ENCODE measurements at regions of chr12 and their contacts with region 1.

Region 1: DNA sequence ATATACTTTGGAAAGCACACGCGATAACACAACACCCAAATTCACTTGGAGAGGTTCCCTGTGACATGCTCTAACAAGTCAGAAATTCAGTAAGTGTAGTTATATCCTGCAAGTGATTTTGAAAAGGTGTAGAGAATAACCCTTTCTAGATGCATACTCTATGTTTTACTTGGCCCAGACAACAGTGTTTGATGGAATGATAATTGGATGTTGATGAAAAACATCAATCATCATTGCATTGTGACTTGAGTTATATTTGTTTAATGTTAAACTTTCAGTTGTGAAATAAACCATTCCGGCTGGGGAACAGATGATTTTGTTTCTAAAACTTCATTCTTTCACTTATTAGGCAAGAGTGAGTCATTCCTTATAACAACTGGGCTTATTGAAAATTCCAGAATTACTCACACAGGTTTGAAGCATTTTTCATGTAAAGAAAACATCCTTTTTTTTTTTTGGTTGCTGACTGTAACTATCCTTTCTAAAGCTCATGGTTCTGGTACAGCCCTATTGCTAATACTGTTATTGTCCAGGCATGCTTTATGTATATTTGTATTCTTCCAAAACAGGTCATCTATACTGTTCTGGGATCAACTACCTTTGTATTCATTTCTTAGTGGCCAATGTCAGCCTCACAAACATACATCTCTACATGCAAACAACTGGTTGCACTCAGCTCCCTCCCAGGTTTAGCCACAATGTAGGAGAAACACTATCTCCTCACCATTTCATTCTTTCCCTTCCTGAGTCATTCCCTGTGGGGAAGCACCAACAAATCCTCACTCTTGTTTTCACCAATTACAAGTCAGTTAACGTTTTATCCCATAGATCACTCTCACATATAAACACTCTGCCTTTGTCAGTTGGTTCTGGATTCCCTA is 121.2 kb upstream of the LRIG3 start:
- DNase-seq: peak; percentile 78
- H3K4me3 ChIP-seq: no peak overlapping the region; the same call in 1 of the 2 replicates
- H3K27ac ChIP-seq: peak overlapping the region; percentile 93
- H3K27me3 ChIP-seq: no peaks in the 10 kb centered on the region
- CTCF ChIP-seq: no peak

Region 2: DNA sequence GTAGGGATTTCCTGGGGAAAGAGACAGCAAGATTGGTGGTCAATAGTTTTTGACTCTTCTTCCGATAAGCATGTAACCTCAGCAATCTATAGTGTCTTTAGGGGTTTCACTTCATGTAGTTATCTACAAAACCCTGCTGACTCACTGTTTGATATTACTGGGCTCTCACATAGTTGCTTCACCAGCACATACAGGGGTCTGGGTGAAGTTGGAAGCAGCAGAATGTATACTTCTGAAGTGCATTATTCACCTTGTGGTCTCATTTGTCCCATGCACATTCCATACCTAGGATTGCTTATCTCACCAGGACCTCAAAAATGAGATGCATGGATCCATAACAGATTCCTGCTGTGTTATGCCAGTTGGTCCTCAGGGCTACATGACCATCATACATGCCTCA is 401.2 kb before region 1 on chr12:
- CTCF ChIA-PET with region 1: no interaction called
- POLR2A ChIA-PET with region 1: no interaction called
- DNase-seq: no peak
- H3K4me3 ChIP-seq: no peak overlapping the region
- H3K27ac ChIP-seq: no peak overlapping the region
- H3K27me3 ChIP-seq: no peaks in the 10 kb centered on the region
- CTCF ChIP-seq: no peak

Region 3: DNA sequence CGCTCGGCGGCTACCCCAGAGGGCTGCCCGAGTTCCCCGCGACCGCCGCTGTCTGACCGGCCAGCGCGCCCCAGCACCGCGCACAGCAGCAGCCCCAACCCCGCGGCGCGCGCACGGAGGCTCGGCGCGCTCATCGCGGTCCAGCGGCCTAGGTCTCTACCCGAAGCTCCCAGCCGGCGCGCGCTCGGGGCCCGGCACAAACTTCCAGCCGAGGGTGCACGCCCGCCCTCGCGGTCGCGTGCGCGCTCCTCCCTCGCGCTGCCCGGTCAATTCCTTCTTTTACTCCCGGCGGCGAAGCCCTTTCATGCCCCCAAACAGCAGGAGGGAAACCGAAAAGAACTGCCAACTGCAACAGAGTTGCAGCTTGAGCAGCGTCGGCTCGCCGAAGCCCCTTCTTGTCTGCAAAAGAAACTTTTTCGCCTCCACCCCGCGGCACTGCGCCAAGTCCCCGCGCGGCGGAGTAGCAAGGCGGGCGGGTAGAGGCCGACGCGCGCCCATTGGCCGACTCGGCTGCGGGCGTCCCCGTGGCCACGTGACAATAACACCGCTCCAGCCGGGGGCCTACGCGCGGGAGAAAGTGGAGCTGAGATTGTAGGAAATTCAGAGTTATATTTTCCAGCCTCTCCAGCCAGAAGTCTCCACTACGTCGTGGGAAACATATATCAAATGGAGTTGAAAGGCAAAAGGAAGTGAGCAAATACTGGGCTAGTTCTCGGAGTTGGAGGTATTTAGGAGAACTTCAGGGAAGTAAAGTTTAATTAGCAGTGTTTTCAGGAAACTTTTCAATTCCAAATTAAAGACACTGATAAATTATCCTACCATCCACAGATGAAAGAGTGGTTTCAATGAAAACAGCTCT is 121.2 kb before region 1 on chr12 and contains the start of gene LRIG3:
- CTCF ChIA-PET with region 1: no interaction called
- POLR2A ChIA-PET with region 1: interaction called, 29 read pairs
- DNase-seq: peak; percentile 76
- H3K4me3 ChIP-seq: peak within 1 kb of the TSS; percentile 75
- H3K27ac ChIP-seq: peak within 1 kb of the TSS; percentile 85
- H3K27me3 ChIP-seq: no peaks in the 10 kb centered on the region
- CTCF ChIP-seq: no peak
- polyA plus RNA-seq, gene LRIG3: 58.2 and 80.1 TPM in 2 replicates

Region 4: DNA sequence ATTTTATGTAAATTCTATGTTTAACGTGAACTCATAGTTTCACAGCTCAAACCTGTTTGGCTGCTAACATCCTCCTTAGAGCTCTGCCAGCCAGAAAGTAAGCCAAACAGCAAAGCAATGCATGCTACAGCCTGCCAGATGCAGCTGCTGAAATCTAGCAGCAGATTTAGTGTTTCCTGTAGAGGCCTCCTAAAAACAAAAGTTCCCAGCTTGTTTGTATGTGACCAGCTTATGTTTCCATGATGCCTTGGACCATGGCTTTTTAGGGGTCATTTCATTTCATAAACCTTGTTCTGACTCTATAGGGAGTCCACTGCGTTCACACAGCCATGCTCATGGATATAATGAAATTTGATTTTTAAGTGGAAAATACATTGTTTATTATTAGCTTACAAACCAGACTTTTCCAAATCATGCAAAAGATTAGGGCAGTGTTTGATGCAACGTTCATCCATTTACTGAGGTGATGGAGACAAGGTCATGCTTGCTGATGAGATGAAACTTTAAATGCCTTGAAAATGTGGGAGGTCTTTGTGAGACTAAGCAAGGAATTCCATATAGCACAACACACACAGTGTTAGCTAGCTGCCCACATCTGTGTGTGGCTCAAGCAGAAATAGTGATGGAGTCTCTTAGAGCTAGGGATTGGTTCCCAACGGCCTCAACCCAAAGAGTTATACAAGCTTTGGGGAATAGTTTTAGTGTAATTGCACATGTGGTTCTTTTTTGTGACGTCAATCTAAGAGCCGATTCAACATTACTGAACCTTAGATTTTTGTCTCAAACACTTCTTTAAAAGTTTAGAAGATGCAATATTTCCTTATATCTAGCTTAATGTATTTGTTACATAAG is 36.3 kb after region 1 on chr12:
- CTCF ChIA-PET with region 1: no interaction called
- POLR2A ChIA-PET with region 1: no interaction called
- DNase-seq: no peak
- H3K4me3 ChIP-seq: no peak overlapping the region
- H3K27ac ChIP-seq: no peak overlapping the region
- H3K27me3 ChIP-seq: no peaks in the 10 kb centered on the region
- CTCF ChIP-seq: no peak

Measured in AG04450 (cell line).